Activated T-helper 2 cell treated with anti-CD3 and anti-CD28 coated beads, Interferon-gamma antibody, Interleukin-2, Interleukin-4, amounts not matched to agents 10 μg/mL and 5 μg/mL and 100 μg/mL, durations not matched to agents 14 hours and 24 hours and 36 hours (primary cell): ENCODE measurements at regions of chr3 and their contacts with region 1.

Region 1: GRCh38 chr3:13414040-13414729 is 5.9 kb downstream of the NUP210 start:
- DNase-seq: peak; percentile 65
- H3K4me3 Mint-ChIP-seq: peak overlapping the region; percentile 83
- H3K27ac Mint-ChIP-seq: peak overlapping the region; percentile 93
- H3K4me1 Mint-ChIP-seq: peaks cover 52% of the 10 kb centered on the region
- H3K27me3 Mint-ChIP-seq: no peaks in the 10 kb centered on the region

Region 2: GRCh38 chr3:13346481-13347389 is 67.5 kb before region 1 on chr3:
- intact Hi-C with region 1: loop called (anchors 2 kb)
- DNase-seq: peak; percentile 65
- H3K4me3 Mint-ChIP-seq: no peak overlapping the region
- H3K27ac Mint-ChIP-seq: peak overlapping the region; percentile 60
- H3K4me1 Mint-ChIP-seq: peaks cover 33% of the 10 kb centered on the region
- H3K27me3 Mint-ChIP-seq: no peaks in the 10 kb centered on the region

Region 3: GRCh38 chr3:13391308-13391707 is 22.9 kb before region 1 on chr3:
- intact Hi-C with region 1: no loop called
- DNase-seq: no peak
- H3K4me3 Mint-ChIP-seq: no peak overlapping the region
- H3K27ac Mint-ChIP-seq: no peak overlapping the region
- H3K4me1 Mint-ChIP-seq: peaks cover 1% of the 10 kb centered on the region
- H3K27me3 Mint-ChIP-seq: no peaks in the 10 kb centered on the region

Region 4: DNA sequence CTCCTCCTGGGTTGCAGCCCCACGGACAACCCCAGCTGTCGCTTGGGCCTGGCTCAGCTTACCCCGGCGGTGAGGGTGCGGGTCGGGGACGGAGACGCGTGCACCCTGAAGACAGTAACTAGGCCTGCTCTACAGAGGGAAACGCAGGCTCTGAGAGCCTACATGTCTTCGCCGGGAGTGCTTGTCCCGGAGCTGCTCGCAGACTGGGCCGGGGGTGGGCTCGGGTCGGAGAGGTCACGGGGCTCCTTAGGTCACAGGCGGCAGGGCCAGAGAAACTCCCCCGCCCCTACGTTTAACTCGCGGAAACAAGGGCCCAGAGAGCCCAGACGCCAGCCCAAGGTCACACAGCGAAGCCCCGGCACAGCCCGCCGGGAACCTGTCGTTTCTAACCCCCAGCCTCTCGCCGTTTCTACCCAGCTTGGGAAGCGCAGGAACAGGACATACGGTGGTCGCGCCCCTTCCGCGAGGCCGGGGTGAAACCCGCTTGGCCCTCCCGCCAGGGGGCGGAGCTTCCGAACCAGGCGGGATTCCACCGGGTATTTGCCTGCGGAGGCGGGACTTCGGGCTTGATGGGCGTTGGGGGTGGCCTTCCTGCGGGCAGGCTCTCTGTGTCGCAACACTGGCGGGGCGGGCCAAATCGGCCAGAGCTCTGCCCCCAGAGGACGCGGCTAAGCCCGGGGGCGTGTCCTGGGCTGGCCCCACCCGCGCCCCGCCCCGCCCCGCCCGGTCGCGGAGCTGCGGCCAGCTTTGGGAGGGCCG is 65.6 kb after region 1 on chr3 and contains the start of gene HDAC11:
- intact Hi-C with region 1: loop called (anchors 1 kb)
- DNase-seq: peak; percentile 97
- H3K4me3 Mint-ChIP-seq: peak within 1 kb of the TSS; percentile 86
- H3K27ac Mint-ChIP-seq: peak within 1 kb of the TSS; percentile 79
- H3K4me1 Mint-ChIP-seq: peaks cover 2% of the 10 kb centered on the region
- H3K27me3 Mint-ChIP-seq: peaks cover 3% of the 10 kb centered on the region
- total RNA-seq, gene HDAC11: 1.7 and 2.6 TPM in 2 replicates